ENCODE measurements at regions of chr17 and their contacts with region 1.

Region 1: DNA sequence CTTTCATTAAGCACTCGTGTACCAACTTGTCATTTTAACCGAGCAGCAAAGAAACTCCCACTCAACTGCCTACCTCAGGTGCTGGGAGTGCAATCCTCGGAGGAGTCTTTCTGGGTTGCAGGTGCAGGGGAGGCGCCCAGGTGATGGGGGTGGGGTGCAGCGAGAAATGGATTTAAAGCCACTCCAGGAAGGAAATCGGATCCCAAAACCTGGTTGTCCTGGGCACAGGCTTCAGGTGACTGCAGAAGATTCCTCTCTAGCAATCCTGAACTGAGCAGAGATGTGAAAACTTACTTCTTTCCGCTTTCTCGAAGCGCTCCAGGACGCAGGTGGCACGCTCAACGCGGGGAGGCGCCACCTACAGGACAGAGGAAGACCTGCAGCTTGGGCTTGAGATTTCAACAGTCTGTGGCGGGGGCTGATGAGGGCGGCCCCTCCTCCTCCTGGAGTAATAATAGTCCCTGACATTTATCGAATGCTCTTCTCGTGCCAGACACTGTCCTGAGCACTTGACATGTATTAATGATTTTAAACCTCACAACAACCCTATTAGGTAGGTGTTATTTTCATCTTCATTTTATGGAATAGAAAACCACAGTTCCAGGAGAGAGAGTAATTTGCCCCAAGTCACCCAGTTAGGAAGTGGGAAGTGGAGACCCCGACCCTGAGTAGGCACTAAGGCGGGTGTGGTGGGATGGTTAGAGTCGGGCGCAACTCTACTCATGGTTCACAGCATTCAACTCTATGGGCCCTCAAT is 27.2 kb upstream of the SKAP1 start:
- DNase-seq: peak; percentile 69
- H3K4me3 Mint-ChIP-seq: peak overlapping the region; percentile 28
- H3K27ac Mint-ChIP-seq: peak overlapping the region; percentile 11
- H3K4me1 Mint-ChIP-seq: peaks cover 69% of the 10 kb centered on the region
- H3K27me3 Mint-ChIP-seq: no peaks in the 10 kb centered on the region

Region 2: GRCh38 chr17:48335858-48336500 is 121.3 kb before region 1 on chr17:
- intact Hi-C with region 1: loop called (anchors 1 kb)
- DNase-seq: no peak
- H3K4me3 Mint-ChIP-seq: no peak overlapping the region
- H3K27ac Mint-ChIP-seq: no peak overlapping the region
- H3K4me1 Mint-ChIP-seq: peaks cover 16% of the 10 kb centered on the region
- H3K27me3 Mint-ChIP-seq: no peaks in the 10 kb centered on the region

Region 3: DNA sequence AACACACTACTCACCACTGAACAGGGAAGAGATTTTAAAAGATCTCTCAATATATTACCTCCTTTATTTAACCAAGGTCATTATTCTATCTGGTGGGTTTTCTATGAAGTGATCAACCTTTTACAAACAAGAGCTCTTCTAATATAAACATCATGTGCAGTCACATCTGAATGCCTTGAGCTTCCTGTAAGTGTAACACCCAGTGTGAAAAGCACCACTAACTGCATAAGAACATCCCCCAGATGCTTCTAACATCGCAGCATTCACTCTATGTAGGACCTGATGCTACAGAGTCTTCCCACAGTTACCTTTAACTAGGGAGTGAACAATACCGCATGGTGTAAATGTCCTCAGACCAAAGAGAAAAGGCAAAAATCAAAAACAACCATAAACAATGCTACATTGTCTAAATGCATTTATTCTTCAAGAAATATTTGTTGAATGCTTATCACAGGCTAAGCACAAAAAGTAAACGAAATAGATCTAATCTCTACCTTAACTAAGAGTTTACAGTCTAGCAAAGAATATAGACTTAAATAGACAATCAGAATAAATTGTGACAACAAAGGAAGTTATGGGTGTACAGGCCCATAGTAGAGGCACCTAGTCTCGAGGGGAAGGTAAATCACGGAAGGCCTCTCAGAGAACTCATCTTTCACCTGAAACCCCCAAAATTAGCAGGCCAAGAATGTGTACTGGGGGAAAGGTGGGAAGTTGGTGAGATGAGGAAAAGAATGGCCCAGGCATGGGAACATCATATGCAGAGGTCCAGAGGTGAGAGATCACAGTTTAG is 43.4 kb before region 1 on chr17:
- intact Hi-C with region 1: loop called (anchors 1 kb)
- DNase-seq: no peak
- H3K4me3 Mint-ChIP-seq: peak overlapping the region; percentile 24
- H3K27ac Mint-ChIP-seq: peak overlapping the region; percentile 86
- H3K4me1 Mint-ChIP-seq: peaks cover 82% of the 10 kb centered on the region
- H3K27me3 Mint-ChIP-seq: no peaks in the 10 kb centered on the region

Region 4: DNA sequence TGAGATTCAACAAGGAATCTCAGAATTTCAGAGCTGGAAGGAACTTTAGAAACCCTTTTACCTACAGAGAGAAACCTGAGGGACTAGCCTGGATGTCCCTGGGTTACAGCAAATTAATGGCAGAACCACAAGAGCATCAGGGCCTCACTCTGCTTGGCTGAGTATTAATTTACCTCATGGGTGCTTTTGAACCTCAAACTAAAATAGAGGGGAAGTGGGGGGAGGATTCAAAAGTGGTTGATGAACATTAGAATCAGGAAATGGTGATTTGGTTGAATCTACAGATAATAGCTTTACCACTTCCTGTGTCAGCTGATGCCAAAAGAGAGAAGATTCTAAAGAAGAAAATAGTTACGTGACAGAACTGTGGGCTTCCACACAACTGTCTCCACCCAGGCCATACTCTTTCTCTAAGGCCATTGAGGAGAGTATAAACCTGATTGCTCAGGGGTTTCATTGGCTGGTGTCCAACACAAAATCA is 16.0 kb before region 1 on chr17:
- intact Hi-C with region 1: loop called (anchors 1 kb)
- DNase-seq: peak; percentile 42
- H3K4me3 Mint-ChIP-seq: peak overlapping the region; percentile 59
- H3K27ac Mint-ChIP-seq: peak overlapping the region; percentile 93
- H3K4me1 Mint-ChIP-seq: peaks cover 88% of the 10 kb centered on the region
- H3K27me3 Mint-ChIP-seq: no peaks in the 10 kb centered on the region

Region 5: GRCh38 chr17:48492401-48493298 is 35.4 kb after region 1 on chr17:
- intact Hi-C with region 1: loop called (anchors 1 kb)
- DNase-seq: peak; percentile 64
- H3K4me3 Mint-ChIP-seq: peak overlapping the region; percentile 45
- H3K27ac Mint-ChIP-seq: peak overlapping the region; percentile 88
- H3K4me1 Mint-ChIP-seq: peaks cover 54% of the 10 kb centered on the region
- H3K27me3 Mint-ChIP-seq: peaks cover 19% of the 10 kb centered on the region

Measured in activated T-helper 1 cell treated with anti-CD3 and anti-CD28 coated beads, Interleukin-12 subunit alpha, Interleukin-12 subunit beta, Interleukin-2, Interleukin-4 antibody, amounts not matched to agents 30 ng/mL and 10 ng/mL and 1 ng/mL, durations not matched to agents 14 hours and 24 hours and 36 hours (primary cell).